ENCODE measurements at regions of chr7 and their contacts with region 1.

Region 1: DNA sequence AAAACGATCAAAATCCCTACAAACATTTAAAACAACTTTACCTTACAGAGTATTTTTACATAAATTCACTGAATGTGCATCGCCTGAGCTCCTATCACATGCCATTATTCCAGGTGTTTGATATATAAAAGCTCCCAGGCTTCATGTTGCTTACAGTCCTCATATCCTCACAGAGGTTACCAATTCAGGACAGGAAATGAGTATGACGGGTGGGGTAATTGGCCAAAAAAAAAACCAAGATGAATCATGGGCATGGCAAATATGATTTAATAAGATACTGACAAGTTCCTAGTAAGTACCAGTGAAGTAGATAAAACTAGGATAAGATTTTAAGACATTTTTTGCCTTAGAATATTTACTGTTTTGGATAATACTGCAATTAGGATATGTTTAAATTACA is 135.8 kb downstream of the KMT2E start:
- DNase-seq: no peak
- ATAC-seq: no peak
- H3K4me3 ChIP-seq: no peak overlapping the region
- H3K27ac ChIP-seq: no peak overlapping the region
- H3K4me1 ChIP-seq: no peaks in the 10 kb centered on the region
- H3K27me3 ChIP-seq: no peaks in the 10 kb centered on the region
- CTCF ChIP-seq: no peak
- EP300 ChIP-seq: no peak
- POLR2A ChIP-seq: no peak
- RAD21 ChIP-seq: no peak

Region 2: GRCh38 chr7:105084581-105084980 is 65.2 kb before region 1 on chr7:
- CTCF ChIA-PET with region 1: no interaction called
- POLR2A ChIA-PET with region 1: no interaction called
- RAD21 ChIA-PET with region 1: no interaction called
- SMC1A ChIA-PET with region 1: no interaction called
- in situ Hi-C with region 1: no loop called
- intact Hi-C with region 1: no loop called
- DNase-seq: no peak
- ATAC-seq: no peak
- H3K4me3 ChIP-seq: no peak overlapping the region
- H3K27ac ChIP-seq: no peak overlapping the region
- H3K4me1 ChIP-seq: no peaks in the 10 kb centered on the region
- H3K27me3 ChIP-seq: no peaks in the 10 kb centered on the region
- CTCF ChIP-seq: no peak
- EP300 ChIP-seq: no peak
- POLR2A ChIP-seq: no peak
- RAD21 ChIP-seq: no peak

Region 3: DNA sequence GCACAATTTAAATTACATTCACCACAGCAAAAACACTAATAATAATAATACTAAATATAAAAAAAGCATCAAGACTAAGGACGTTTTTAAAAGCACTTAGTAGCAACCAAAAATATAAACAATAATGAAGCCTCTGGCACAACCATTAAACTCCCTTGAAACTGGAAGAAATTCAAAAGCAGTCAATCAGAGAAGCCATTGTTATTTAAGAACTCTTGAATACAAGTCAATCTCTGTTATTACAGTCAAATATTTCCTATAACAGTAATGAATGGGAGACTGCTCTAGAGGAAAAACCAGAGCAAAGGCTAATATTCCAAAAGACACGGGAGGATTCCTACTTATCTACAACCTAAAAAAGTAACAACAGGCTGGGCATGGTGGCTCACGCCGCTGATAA is 28.4 kb after region 1 on chr7:
- CTCF ChIA-PET with region 1: no interaction called
- POLR2A ChIA-PET with region 1: no interaction called
- RAD21 ChIA-PET with region 1: no interaction called
- SMC1A ChIA-PET with region 1: no interaction called
- in situ Hi-C with region 1: no loop called
- intact Hi-C with region 1: no loop called
- DNase-seq: no peak
- ATAC-seq: no peak
- H3K4me3 ChIP-seq: no peak overlapping the region
- H3K27ac ChIP-seq: no peak overlapping the region
- H3K4me1 ChIP-seq: no peaks in the 10 kb centered on the region
- H3K27me3 ChIP-seq: no peaks in the 10 kb centered on the region
- CTCF ChIP-seq: no peak
- EP300 ChIP-seq: no peak
- POLR2A ChIP-seq: no peak
- RAD21 ChIP-seq: no peak

Region 4: GRCh38 chr7:105336009-105336408 is 186.2 kb after region 1 on chr7:
- CTCF ChIA-PET with region 1: interaction called, 13 read pairs
- POLR2A ChIA-PET with region 1: no interaction called
- RAD21 ChIA-PET with region 1: interaction called, 5 read pairs
- SMC1A ChIA-PET with region 1: interaction called, 25 read pairs
- in situ Hi-C with region 1: no loop called
- intact Hi-C with region 1: loop called (anchors 5 kb)
- DNase-seq: no peak
- ATAC-seq: no peak
- H3K4me3 ChIP-seq: no peak overlapping the region
- H3K27ac ChIP-seq: no peak overlapping the region
- H3K4me1 ChIP-seq: no peaks in the 10 kb centered on the region
- H3K27me3 ChIP-seq: no peaks in the 10 kb centered on the region
- CTCF ChIP-seq: peak in 2 of 3 experiments; percentile 26 to 49; a peak in 2 of 6 replicates
- EP300 ChIP-seq: no peak
- POLR2A ChIP-seq: no peak
- RAD21 ChIP-seq: peak; percentile 26; the same call in 1 of the 2 replicates

Measured in GM12878 (cell line).